ENCODE measurements at regions of chrX and their contacts with region 1.

Region 1: GRCh38 chrX:21374163-21374993 is at the start of gene CNKSR2:
- DNase-seq: peak; percentile 40 to 79 (median 70)
- ATAC-seq: peak; percentile 83
- H3K4me3 ChIP-seq: peak within 1 kb of the TSS; percentile 62
- H3K4me3 Mint-ChIP-seq: peak within 1 kb of the TSS; percentile 84 to 95 (median 92)
- H3K27ac ChIP-seq: peak within 1 kb of the TSS; percentile 70
- H3K27ac Mint-ChIP-seq: peak within 1 kb of the TSS; percentile 55 to 90 (median 82)
- H3K4me1 ChIP-seq: peaks cover 0 to 7% of the 10 kb centered on the region in 2 donors
- H3K4me1 Mint-ChIP-seq: peaks cover 6 to 39% (median 34%) of the 10 kb centered on the region in 7 donors
- H3K27me3 ChIP-seq: no peaks in the 10 kb centered on the region
- H3K27me3 Mint-ChIP-seq: peaks cover 0 to 14% (median 0%) of the 10 kb centered on the region in 5 donors
- total RNA-seq, gene CNKSR2: 6.3 to 25.3 (median 16.9) TPM

Region 2: GRCh38 chrX:20530406-20530921 is 843.9 kb before region 1 on chrX:
- CTCF ChIA-PET with region 1: no interaction called
- POLR2A ChIA-PET with region 1: no interaction called
- intact Hi-C with region 1: loop called (anchors 2 to 5 kb)
- DNase-seq: peak; percentile 10 to 61 (median 43)
- ATAC-seq: peak; percentile 47
- H3K4me3 ChIP-seq: no peak overlapping the region
- H3K4me3 Mint-ChIP-seq: peak overlapping the region in 4 of 10 donors; percentile 16 to 48 (median 32)
- H3K27ac ChIP-seq: no peak overlapping the region
- H3K27ac Mint-ChIP-seq: peak overlapping the region in 2 of 9 donors; percentile 6 to 39
- H3K4me1 ChIP-seq: no peaks in the 10 kb centered on the region
- H3K4me1 Mint-ChIP-seq: peaks cover 0 to 16% (median 4%) of the 10 kb centered on the region in 7 donors
- H3K27me3 ChIP-seq: no peaks in the 10 kb centered on the region
- H3K27me3 Mint-ChIP-seq: peaks cover 18 to 59% (median 22%) of the 10 kb centered on the region in 5 donors

Region 3: DNA sequence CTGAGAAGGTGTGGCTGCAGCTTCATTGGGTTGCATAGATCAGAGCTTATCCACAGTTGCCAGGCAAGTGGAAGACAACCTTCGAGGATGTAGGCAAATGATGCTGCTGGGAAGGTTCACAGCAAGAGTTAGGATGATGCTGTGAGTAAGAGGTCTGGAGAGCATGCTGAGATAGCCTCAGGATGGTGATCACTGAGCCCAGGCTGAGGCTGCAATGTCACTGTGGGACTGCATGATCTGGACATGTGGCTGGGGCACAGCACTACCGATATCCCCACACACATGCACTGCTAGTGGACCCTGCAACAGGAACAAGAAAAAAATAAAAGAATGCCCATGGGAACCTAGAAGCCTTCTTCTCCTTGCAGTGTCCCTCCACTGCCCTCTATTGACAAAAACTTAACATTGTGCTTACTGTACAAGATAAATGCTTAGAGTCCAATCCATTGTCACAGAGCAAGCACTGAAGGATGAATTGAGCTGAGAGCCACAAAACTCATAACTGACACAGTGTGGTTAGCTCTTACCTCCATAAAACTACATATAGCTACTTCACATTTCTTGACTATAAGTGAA is 105.4 kb after region 1 on chrX:
- CTCF ChIA-PET with region 1: interaction called, 6 read pairs
- POLR2A ChIA-PET with region 1: interaction called, 3 read pairs
- intact Hi-C with region 1: loop called (anchors 2 to 5 kb)
- DNase-seq: peak in 7 of 9 donors; percentile 13 to 59 (median 43)
- ATAC-seq: peak; percentile 67
- H3K4me3 ChIP-seq: no peak overlapping the region
- H3K4me3 Mint-ChIP-seq: no peak overlapping the region
- H3K27ac ChIP-seq: no peak overlapping the region
- H3K27ac Mint-ChIP-seq: no peak overlapping the region
- H3K4me1 ChIP-seq: no peaks in the 10 kb centered on the region
- H3K4me1 Mint-ChIP-seq: peaks cover 0 to 22% (median 14%) of the 10 kb centered on the region in 7 donors
- H3K27me3 ChIP-seq: peaks cover 0 to 3% of the 10 kb centered on the region in 2 donors
- H3K27me3 Mint-ChIP-seq: no peaks in the 10 kb centered on the region

Region 4: DNA sequence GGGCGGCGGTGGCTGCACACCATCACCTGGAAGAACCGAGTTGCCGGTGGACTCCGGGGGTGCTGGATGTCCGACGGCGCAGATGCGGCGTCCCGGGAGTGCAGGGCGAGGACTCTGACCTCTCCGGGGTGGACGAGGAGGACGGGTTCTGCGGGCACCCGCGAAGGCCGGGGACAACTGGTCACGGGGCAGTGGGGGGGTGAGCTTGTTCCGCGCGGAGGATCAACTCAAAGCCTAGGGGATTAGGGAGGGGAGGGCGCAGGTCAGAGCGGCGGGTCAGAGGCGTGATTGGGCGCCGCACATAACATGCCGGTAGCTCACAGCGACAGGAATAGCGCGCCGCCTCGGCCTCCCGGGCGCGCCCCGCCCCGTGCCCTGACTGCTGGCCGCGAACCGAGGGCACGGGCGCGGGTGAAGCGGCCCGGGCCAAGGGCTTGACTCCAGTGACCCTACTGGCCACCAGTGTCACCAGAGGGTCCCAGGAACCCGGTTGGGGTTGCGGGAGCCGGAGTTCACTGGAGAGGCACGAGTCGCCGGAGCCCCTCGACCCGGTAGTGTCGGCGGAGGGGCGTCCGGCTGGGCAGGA is 283.9 kb after region 1 on chrX and contains the start of gene KLHL34:
- CTCF ChIA-PET with region 1: no interaction called
- POLR2A ChIA-PET with region 1: interaction called, 3 read pairs
- intact Hi-C with region 1: loop called in 1 of 2 experiments (anchors 1 kb)
- DNase-seq: peak in 6 of 9 donors; percentile 17 to 24 (median 20)
- ATAC-seq: peak; percentile 56
- H3K4me3 ChIP-seq: peak within 1 kb of the TSS; percentile 43
- H3K4me3 Mint-ChIP-seq: peak within 1 kb of the TSS; percentile 65 to 88 (median 80)
- H3K27ac ChIP-seq: peak within 1 kb of the TSS; percentile 59
- H3K27ac Mint-ChIP-seq: peak within 1 kb of the TSS in 8 of 9 donors; percentile 70 to 89 (median 84)
- H3K4me1 ChIP-seq: no peaks in the 10 kb centered on the region
- H3K4me1 Mint-ChIP-seq: peaks cover 0 to 28% (median 4%) of the 10 kb centered on the region in 7 donors
- H3K27me3 ChIP-seq: no peaks in the 10 kb centered on the region
- H3K27me3 Mint-ChIP-seq: peaks cover 0 to 17% (median 4%) of the 10 kb centered on the region in 5 donors
- total RNA-seq, gene KLHL34: 0.41 to 5.3 (median 1.1) TPM

Region 5: DNA sequence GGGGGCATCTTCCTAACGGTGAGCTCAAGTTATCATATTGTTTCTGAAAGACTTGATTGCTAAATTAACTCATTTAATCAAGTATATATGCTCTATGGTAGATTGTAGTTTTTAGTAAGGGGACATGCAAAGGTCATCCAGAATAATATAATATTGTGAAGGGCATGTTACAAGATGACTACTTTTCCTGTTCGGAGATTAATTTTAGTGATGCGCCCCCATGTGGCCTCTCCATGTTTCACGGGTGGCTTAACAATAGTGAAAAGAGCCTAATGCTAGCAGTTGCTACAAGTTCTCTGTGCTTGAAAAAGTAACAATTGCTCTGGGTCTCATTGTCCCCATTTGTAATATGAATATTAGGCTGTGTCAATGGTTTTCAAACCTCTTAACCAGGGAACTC is 371.4 kb after region 1 on chrX:
- CTCF ChIA-PET with region 1: no interaction called
- POLR2A ChIA-PET with region 1: no interaction called
- intact Hi-C with region 1: loop called in 1 of 2 experiments (anchors 10 kb)
- DNase-seq: peak in 8 of 9 donors; percentile 3 to 23 (median 18)
- ATAC-seq: no peak
- H3K4me3 ChIP-seq: no peak overlapping the region
- H3K4me3 Mint-ChIP-seq: no peak overlapping the region
- H3K27ac ChIP-seq: no peak overlapping the region
- H3K27ac Mint-ChIP-seq: no peak overlapping the region
- H3K4me1 ChIP-seq: no peaks in the 10 kb centered on the region
- H3K4me1 Mint-ChIP-seq: no peaks in the 10 kb centered on the region
- H3K27me3 ChIP-seq: no peaks in the 10 kb centered on the region
- H3K27me3 Mint-ChIP-seq: peaks cover 0 to 21% (median 0%) of the 10 kb centered on the region in 5 donors

Region 6: GRCh38 chrX:21985332-21985777 is 611.0 kb after region 1 on chrX:
- CTCF ChIA-PET with region 1: no interaction called
- POLR2A ChIA-PET with region 1: no interaction called
- intact Hi-C with region 1: loop called in 1 of 2 experiments (anchors 10 kb)
- DNase-seq: peak; percentile 10 to 74 (median 61)
- ATAC-seq: peak; percentile 100
- H3K4me3 ChIP-seq: no peak overlapping the region
- H3K4me3 Mint-ChIP-seq: no peak overlapping the region
- H3K27ac ChIP-seq: no peak overlapping the region
- H3K27ac Mint-ChIP-seq: peak overlapping the region in 1 of 9 donors; percentile 70
- H3K4me1 ChIP-seq: no peaks in the 10 kb centered on the region
- H3K4me1 Mint-ChIP-seq: peaks cover 0 to 10% (median 4%) of the 10 kb centered on the region in 7 donors
- H3K27me3 ChIP-seq: no peaks in the 10 kb centered on the region
- H3K27me3 Mint-ChIP-seq: no peaks in the 10 kb centered on the region